ENCODE measurements at regions of chr2 and their contacts with region 1.

Region 1: DNA sequence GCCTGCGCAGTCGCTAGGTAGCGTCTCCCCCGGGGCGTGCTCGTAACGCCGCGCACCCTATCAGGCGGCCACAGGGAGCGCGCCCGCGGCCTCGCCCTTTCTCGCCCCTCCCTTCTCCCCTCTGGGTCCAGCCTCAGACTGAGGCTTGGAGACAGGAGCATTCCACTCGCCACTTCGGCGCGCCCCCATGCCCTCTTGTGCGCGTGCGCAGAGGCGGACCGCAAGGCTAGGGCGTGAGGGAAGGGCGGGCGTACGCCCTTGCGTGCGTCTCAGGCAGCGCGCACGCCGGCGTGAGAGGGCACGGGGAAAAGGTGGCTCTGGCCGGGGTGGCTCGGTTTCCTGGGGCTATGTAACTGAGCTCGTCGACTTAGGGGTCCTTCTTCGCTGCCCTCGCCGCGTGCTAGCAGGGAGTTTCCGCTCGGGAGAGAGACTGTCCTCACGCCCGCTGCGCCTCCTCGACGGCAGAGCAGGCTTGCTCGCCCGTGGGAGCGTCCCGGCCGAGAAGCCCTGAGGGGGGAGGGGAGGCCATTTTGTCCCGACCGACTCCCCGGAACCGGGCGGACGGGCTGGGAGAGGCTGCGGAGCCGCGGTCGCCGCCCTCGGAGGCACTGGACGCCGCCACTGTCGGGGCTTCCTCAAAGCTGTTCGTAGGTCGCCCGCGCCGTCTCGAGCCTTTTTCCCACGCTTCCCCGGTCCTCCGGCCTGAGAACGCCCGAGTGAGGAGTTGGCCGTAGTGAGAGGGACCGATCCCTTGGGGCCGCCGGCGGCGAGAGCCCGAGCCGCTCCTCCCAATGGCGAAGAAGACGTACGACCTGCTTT is at the start of gene RAB10:
- DNase-seq: peak; percentile 100
- H3K4me3 ChIP-seq: peak within 1 kb of the TSS; percentile 77 to 97 (median 96)
- H3K27ac ChIP-seq: peak within 1 kb of the TSS; percentile 92 to 99 (median 96)
- H3K4me1 ChIP-seq: peaks cover 0 to 46% (median 38%) of the 10 kb centered on the region in 4 donors
- H3K27me3 ChIP-seq: no peaks in the 10 kb centered on the region
- CTCF ChIP-seq: no peak
- EP300 ChIP-seq: no peak
- POLR2A ChIP-seq: peak; percentile 94 to 98
- total RNA-seq, gene RAB10: 92.0 to 116 (median 98.9) TPM

Region 2: DNA sequence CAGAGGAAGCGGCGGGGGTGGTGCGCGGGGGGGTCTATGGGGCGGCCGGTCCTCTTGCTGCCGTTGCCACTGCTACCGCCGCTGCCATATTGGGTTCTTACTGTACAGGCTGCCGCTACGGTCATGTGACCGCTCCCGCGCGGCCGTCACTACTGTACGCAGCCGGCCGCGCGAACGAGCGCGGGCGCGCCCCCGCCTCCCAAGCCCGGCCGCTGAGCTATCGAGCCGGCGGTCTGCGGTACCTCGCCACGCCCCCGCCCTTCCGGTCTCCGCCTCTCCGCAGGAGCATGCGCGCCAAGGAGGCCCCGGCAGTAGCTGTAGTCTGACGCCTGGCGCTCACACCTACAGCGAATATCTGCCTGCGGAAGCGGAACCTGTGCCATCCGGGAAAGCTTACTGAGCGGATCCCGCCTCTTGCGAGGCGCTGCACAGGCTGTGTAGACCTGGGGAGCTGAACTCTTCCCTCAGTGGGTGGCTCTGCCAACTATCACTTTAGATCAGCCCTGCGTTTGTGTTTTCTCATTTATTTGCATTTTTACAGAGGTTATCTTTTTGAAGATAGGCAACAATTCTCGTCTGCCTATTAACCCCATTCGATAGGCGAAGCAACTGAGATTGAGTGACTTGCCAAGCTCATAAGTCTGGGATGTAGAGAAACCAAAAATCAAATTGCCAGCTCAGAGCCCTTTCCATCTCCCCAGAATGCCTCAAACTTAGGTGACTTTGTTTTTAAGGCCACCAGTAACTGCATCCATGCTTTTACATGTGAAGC is 155.5 kb before region 1 on chr2 and contains the start of gene ASXL2:
- intact Hi-C with region 1: loop called (anchors 5 kb)
- DNase-seq: peak; percentile 98
- H3K4me3 ChIP-seq: peak within 1 kb of the TSS; percentile 61 to 93 (median 80)
- H3K27ac ChIP-seq: peak within 1 kb of the TSS; percentile 91 to 97 (median 92)
- H3K4me1 ChIP-seq: peaks cover 0 to 30% (median 19%) of the 10 kb centered on the region in 4 donors
- H3K27me3 ChIP-seq: no peaks in the 10 kb centered on the region
- CTCF ChIP-seq: peak in 1 of 4 experiments; percentile 8
- EP300 ChIP-seq: peak in 1 of 4 donors; percentile 7
- POLR2A ChIP-seq: peak; percentile 48 to 49
- total RNA-seq, gene ASXL2: 10.7 to 15.5 (median 14.4) TPM

Region 3: GRCh38 chr2:25951071-25951547 is 82.9 kb before region 1 on chr2:
- intact Hi-C with region 1: loop called (anchors 1 kb)
- DNase-seq: peak; percentile 90
- H3K4me3 ChIP-seq: no peak overlapping the region
- H3K27ac ChIP-seq: peak overlapping the region in 3 of 4 donors; percentile 10 to 46 (median 39)
- H3K4me1 ChIP-seq: peaks cover 0 to 4% (median 0%) of the 10 kb centered on the region in 4 donors
- H3K27me3 ChIP-seq: no peaks in the 10 kb centered on the region
- CTCF ChIP-seq: peak; percentile 79 to 89 (median 88)
- EP300 ChIP-seq: no peak
- POLR2A ChIP-seq: no peak

Region 4: GRCh38 chr2:25982273-25982967 is 51.6 kb before region 1 on chr2 and contains the start of gene KIF3C:
- intact Hi-C with region 1: loop called (anchors 5 kb)
- DNase-seq: peak; percentile 86
- H3K4me3 ChIP-seq: peak within 1 kb of the TSS; percentile 68 to 95 (median 78)
- H3K27ac ChIP-seq: peak within 1 kb of the TSS; percentile 68 to 82 (median 74)
- H3K4me1 ChIP-seq: peaks cover 0 to 54% (median 41%) of the 10 kb centered on the region in 4 donors
- H3K27me3 ChIP-seq: no peaks in the 10 kb centered on the region
- CTCF ChIP-seq: no peak
- EP300 ChIP-seq: no peak
- POLR2A ChIP-seq: no peak
- total RNA-seq, gene KIF3C: 5.7 to 12.5 (median 8.1) TPM

Region 5: DNA sequence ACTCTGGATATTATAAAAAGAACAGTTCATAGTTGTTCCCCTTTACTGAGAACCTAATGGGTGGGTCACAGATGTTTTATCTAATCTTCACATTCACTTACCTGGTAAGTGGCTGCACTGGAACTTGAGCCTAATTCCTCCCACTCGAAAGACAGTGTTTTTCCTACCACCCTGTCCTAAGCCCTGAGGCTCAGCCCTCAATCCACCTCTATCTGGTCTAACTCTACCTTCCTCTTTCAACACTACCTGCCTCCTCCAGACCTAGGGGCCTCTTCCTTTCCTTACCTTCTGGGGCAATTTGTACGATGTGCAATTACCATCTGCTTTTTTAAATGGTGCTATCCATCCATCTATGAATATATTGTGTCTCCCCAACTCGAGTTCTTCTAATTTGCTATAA is 42.1 kb before region 1 on chr2:
- intact Hi-C with region 1: loop called (anchors 2 kb)
- DNase-seq: no peak
- H3K4me3 ChIP-seq: no peak overlapping the region
- H3K27ac ChIP-seq: no peak overlapping the region
- H3K4me1 ChIP-seq: peaks cover 0 to 7% (median 0%) of the 10 kb centered on the region in 4 donors
- H3K27me3 ChIP-seq: no peaks in the 10 kb centered on the region
- CTCF ChIP-seq: no peak
- EP300 ChIP-seq: no peak
- POLR2A ChIP-seq: no peak

Region 6: GRCh38 chr2:26080356-26080755 is 46.3 kb after region 1 on chr2:
- intact Hi-C with region 1: loop called (anchors 5 kb)
- DNase-seq: no peak
- H3K4me3 ChIP-seq: no peak overlapping the region
- H3K27ac ChIP-seq: no peak overlapping the region
- H3K4me1 ChIP-seq: peaks cover 0 to 34% (median 23%) of the 10 kb centered on the region in 4 donors
- H3K27me3 ChIP-seq: no peaks in the 10 kb centered on the region
- CTCF ChIP-seq: no peak
- EP300 ChIP-seq: no peak
- POLR2A ChIP-seq: no peak

Region 7: GRCh38 chr2:26345545-26346453 is 311.8 kb after region 1 on chr2 and contains the start of gene SELENOI:
- intact Hi-C with region 1: loop called (anchors 5 kb)
- DNase-seq: peak; percentile 99
- H3K4me3 ChIP-seq: peak within 1 kb of the TSS; percentile 64 to 90 (median 80)
- H3K27ac ChIP-seq: peak within 1 kb of the TSS; percentile 90 to 97 (median 92)
- H3K4me1 ChIP-seq: peaks cover 0 to 27% (median 26%) of the 10 kb centered on the region in 4 donors
- H3K27me3 ChIP-seq: no peaks in the 10 kb centered on the region
- CTCF ChIP-seq: no peak
- EP300 ChIP-seq: peak in 1 of 4 donors; percentile 24
- POLR2A ChIP-seq: peak; percentile 94 to 97
- total RNA-seq, gene SELENOI: 6.6 to 11.0 (median 8.9) TPM

Measured in sigmoid colon (tissue), 7 donors.